MCF 10A (cell line): ENCODE measurements at regions of chr7 and their contacts with region 1.

Region 1: DNA sequence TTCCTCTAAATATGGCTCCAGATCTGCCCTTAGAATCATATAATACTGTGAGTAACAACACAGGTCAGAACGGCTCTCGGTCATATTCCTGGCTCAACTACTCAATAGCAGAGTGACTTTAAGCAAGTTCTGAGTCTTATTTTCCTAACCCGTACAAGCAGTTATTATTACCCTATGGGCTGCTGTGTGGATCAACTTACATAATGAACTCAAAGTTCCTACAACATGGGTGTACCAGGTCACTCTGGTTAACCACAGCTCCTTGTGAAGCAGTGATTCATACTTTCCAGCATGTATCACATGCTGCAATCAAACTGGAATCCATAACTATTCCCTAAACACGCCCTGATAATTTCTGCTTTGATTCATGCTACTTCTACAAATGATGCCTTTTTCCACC is 107.3 kb downstream of the LRRN3 start:
- DNase-seq: peak; percentile 95
- H3K4me3 Mint-ChIP-seq: peak overlapping the region; percentile 7
- H3K27ac Mint-ChIP-seq: peak overlapping the region; percentile 74
- H3K4me1 Mint-ChIP-seq: peaks cover 12% of the 10 kb centered on the region
- H3K27me3 Mint-ChIP-seq: no peaks in the 10 kb centered on the region
- CTCF ChIP-seq: no peak

Region 2: GRCh38 chr7:110590415-110590814 is 607.8 kb before region 1 on chr7:
- CTCF ChIA-PET with region 1: no interaction called
- POLR2A ChIA-PET with region 1: no interaction called
- intact Hi-C with region 1: no loop called
- DNase-seq: no peak
- H3K4me3 Mint-ChIP-seq: no peak overlapping the region
- H3K27ac Mint-ChIP-seq: no peak overlapping the region
- H3K4me1 Mint-ChIP-seq: no peaks in the 10 kb centered on the region
- H3K27me3 Mint-ChIP-seq: no peaks in the 10 kb centered on the region
- CTCF ChIP-seq: no peak

Region 3: DNA sequence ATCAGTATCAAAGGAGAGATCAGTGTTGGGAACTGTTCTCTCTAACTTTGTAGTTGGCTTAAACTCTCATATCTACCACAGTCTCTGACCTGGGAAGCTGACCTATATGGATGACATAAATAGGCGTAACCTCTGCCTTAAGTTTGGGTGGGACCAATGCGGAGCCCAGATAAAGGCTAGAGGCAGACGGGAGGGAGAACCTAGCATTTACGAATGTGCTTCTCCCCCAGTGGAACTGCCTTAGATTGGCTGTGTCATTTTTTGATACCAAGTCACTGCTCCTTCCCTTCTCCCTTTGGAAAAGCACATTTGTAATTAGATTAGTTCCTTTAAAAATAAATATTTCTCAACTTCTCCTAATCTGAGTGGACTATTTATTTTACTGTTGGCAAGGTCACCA is 131.0 kb before region 1 on chr7:
- CTCF ChIA-PET with region 1: no interaction called
- POLR2A ChIA-PET with region 1: no interaction called
- intact Hi-C with region 1: no loop called
- DNase-seq: no peak
- H3K4me3 Mint-ChIP-seq: no peak overlapping the region
- H3K27ac Mint-ChIP-seq: no peak overlapping the region
- H3K4me1 Mint-ChIP-seq: peaks cover 6% of the 10 kb centered on the region
- H3K27me3 Mint-ChIP-seq: no peaks in the 10 kb centered on the region
- CTCF ChIP-seq: no peak

Region 4: GRCh38 chr7:111364413-111364812 is 166.2 kb after region 1 on chr7:
- CTCF ChIA-PET with region 1: no interaction called
- POLR2A ChIA-PET with region 1: no interaction called
- intact Hi-C with region 1: loop called (anchors 2 kb)
- DNase-seq: peak; percentile 92
- H3K4me3 Mint-ChIP-seq: no peak overlapping the region
- H3K27ac Mint-ChIP-seq: peak overlapping the region; percentile 31
- H3K4me1 Mint-ChIP-seq: peaks cover 15% of the 10 kb centered on the region
- H3K27me3 Mint-ChIP-seq: no peaks in the 10 kb centered on the region
- CTCF ChIP-seq: no peak